PC-3 (cell line): ENCODE measurements at regions of chr18 and their contacts with region 1.

Region 1: GRCh38 chr18:12391618-12392165 is 14.7 kb upstream of the AFG3L2 start:
- DNase-seq: peak; percentile 77
- ATAC-seq: peak; percentile 56
- H3K4me3 ChIP-seq: no peak overlapping the region
- H3K27ac ChIP-seq: no peak overlapping the region
- H3K4me1 ChIP-seq: peaks cover 29% of the 10 kb centered on the region
- H3K27me3 ChIP-seq: no peaks in the 10 kb centered on the region
- CTCF ChIP-seq: peak; percentile 97

Region 2: DNA sequence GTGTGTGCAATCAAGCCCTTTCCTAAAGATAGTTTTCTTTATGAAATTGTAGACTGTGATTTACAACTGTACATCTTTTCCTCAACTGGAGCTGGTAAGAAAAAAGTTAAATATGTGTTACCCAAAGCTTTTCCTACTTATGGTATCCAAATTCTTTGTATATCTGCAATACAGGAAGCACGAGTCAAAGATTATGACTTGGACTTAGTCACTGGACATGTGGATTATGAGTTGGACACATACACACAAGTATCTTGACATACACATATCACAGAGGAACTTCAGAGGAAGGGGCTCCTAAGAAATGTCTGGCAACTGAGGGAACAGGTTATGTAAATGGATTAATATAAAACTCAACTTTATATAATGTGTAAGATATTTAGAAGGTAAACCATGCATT is 51.3 kb after region 1 on chr18:
- CTCF ChIA-PET with region 1: interaction called, 6 read pairs
- POLR2A ChIA-PET with region 1: no interaction called
- intact Hi-C with region 1: loop called (anchors 5 kb)
- DNase-seq: peak; percentile 42
- ATAC-seq: peak; percentile 31
- H3K4me3 ChIP-seq: no peak overlapping the region
- H3K27ac ChIP-seq: no peak overlapping the region
- H3K4me1 ChIP-seq: no peaks in the 10 kb centered on the region
- H3K27me3 ChIP-seq: no peaks in the 10 kb centered on the region
- CTCF ChIP-seq: no peak

Region 3: GRCh38 chr18:12543697-12544096 is 152.0 kb after region 1 on chr18:
- CTCF ChIA-PET with region 1: no interaction called
- POLR2A ChIA-PET with region 1: no interaction called
- intact Hi-C with region 1: loop called (anchors 5 kb)
- DNase-seq: peak; percentile 85
- ATAC-seq: peak; percentile 72
- H3K4me3 ChIP-seq: peak overlapping the region; percentile 40
- H3K27ac ChIP-seq: peak overlapping the region; percentile 74
- H3K4me1 ChIP-seq: peaks cover 34% of the 10 kb centered on the region
- H3K27me3 ChIP-seq: no peaks in the 10 kb centered on the region
- CTCF ChIP-seq: no peak

Region 4: DNA sequence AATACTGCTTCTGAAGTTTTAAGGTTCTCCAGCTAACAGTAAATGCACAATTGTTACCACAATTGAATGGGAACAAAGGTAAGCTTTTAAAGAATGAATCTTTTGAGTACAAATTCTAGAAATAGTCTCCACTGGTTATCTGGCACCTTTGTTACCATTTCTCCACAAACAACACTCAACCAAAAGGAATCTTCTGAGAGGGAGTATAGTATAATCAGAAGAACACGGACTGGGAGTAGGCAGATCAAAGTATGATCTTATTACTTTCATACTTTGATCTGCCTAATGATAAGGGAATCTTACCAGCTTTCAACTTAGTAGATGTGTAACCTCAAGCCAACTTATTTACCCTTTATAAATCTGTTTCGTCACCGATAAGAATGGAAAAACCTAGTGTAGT is 309.5 kb after region 1 on chr18:
- CTCF ChIA-PET with region 1: no interaction called
- POLR2A ChIA-PET with region 1: no interaction called
- intact Hi-C with region 1: loop called (anchors 2 kb)
- DNase-seq: peak; percentile 37
- ATAC-seq: 0 out of 2 replicates have a peak, but pooled peaks have one; percentile 3
- H3K4me3 ChIP-seq: peak overlapping the region; percentile 80
- H3K27ac ChIP-seq: no peak overlapping the region
- H3K4me1 ChIP-seq: peaks cover 34% of the 10 kb centered on the region
- H3K27me3 ChIP-seq: no peaks in the 10 kb centered on the region
- CTCF ChIP-seq: no peak